ENCODE measurements at regions of chr14 and their contacts with region 1.

Region 1: DNA sequence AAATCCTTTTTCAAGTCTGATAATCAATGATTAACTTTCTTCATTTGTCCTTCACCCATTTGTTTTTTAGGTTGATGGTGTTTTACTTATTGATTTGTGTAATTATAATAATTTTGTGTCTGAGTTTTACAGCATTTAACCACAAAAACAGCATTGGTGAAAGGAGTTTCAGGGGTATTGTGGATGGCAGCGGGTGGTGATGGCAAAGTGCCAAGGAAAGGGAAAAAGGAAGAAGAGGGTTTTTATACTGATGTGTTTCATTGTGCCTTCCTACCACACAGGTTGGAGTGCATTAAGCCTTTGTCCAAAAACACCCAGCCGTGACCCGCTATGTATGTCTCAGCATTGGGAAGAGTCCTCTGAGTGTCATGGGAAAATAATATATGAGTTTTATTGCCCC is 150.3 kb downstream of the DAD1 start:
- DNase-seq: no peak
- ATAC-seq: no peak
- H3K4me3 Mint-ChIP-seq: no peak overlapping the region
- H3K27ac Mint-ChIP-seq: no peak overlapping the region
- H3K4me1 Mint-ChIP-seq: peaks cover 4% of the 10 kb centered on the region
- H3K27me3 Mint-ChIP-seq: no peaks in the 10 kb centered on the region
- CTCF ChIP-seq: no peak

Region 2: DNA sequence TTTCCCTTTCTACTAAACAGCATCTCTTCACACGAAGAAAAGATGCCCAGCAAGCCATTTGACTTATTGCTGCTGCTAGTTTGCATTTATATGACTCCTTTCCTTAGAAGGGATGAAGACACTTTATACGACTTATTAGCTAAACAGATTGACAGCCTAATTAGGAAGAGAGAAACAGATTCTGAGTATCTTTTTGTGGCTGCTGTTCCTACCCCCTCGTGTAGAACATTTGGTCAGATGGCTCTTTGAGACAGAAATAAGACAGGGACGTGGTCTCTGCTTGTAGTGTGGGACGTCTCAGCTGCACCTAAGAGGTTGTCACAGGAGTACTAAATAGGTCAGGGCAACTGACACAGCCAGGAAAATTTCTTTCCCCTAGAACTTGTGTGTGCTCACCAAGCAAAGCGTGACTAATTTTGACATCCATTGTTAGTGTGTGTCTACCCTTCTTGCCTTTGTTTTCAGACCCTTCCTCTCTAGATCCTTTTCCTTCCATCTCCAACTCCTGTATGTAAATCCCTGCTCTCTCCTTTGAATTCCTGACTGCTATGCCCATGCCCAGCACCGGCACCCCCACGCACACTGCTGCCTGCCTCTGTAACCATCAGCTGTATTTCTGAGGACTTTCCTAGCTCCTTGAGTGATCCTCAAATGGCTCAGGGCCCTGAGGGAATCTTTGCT is 67.1 kb after region 1 on chr14:
- CTCF ChIA-PET with region 1: no interaction called
- POLR2A ChIA-PET with region 1: no interaction called
- intact Hi-C with region 1: no loop called
- DNase-seq: no peak
- ATAC-seq: peak; percentile 29
- H3K4me3 Mint-ChIP-seq: peak overlapping the region; percentile 49
- H3K27ac Mint-ChIP-seq: peak overlapping the region; percentile 90
- H3K4me1 Mint-ChIP-seq: peaks cover 70% of the 10 kb centered on the region
- H3K27me3 Mint-ChIP-seq: no peaks in the 10 kb centered on the region
- CTCF ChIP-seq: no peak

Region 3: DNA sequence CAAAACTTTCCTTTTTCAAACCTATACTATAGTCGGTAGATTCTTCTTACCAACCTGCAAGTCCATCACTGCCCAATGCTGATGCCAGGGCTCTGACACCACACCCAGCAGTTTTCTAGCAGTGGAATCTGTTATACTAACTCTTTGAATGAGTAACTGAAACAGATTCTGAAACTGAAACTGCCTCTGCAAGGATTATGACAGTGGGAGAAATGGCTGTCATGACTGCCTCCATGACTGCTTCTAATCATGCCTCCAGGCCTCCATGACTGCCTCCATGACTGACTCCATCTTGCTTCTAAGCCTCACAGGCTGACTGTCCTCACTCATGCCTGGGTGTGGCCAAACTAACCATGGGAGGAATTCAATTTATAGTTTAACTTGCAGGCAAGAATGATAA is 298.3 kb after region 1 on chr14:
- CTCF ChIA-PET with region 1: no interaction called
- POLR2A ChIA-PET with region 1: interaction called, 13 read pairs
- intact Hi-C with region 1: no loop called
- DNase-seq: no peak
- ATAC-seq: peak; percentile 57
- H3K4me3 Mint-ChIP-seq: no peak overlapping the region
- H3K27ac Mint-ChIP-seq: no peak overlapping the region
- H3K4me1 Mint-ChIP-seq: peaks cover 4% of the 10 kb centered on the region
- H3K27me3 Mint-ChIP-seq: no peaks in the 10 kb centered on the region
- CTCF ChIP-seq: no peak

Measured in activated B cell treated with CpG ODN at 0.5 μM for 24 hours (primary cell).